CD4-positive, alpha-beta memory T cell (primary cell): ENCODE measurements at regions of chr17 and their contacts with region 1.

Region 1: DNA sequence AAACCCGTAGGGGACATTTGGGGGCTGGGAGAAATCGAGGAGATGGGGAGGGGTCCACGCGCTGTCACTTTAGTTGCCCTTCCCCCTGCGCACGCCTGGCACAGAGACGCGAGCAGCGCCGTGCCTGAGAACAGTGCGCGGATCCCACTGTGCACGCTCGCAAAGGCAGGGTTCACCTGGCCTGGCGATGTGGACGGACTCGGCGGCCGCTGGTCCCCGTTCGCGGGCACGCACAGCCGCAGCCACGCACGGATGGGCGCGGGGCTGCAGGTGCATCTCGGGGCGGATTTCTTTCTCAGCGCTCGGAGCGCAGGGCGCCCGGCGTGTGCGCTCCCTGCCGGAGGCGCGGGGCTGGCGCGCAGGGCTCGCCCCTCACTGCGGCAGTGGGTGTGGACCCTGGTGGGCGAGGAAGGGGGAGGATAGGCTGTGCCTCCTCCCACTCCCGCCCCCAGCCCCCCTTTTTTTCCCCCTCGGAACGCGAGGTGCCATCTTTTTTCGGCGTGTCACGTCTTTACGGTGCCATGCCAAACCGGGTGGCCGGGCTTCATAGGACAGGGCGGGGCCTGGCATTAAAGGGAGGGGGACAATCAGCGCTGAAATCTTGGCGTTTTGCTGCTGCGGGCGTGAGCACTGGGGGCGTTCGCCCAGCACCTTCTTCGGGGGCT is 1.1 kb downstream of the MAPT start:
- DNase-seq: peak; percentile 26 to 47 (median 32)
- H3K4me3 ChIP-seq: peak overlapping the region; percentile 47 to 76
- H3K4me3 Mint-ChIP-seq: peak overlapping the region; percentile 87 to 93 (median 88)
- H3K27ac ChIP-seq: no peak overlapping the region
- H3K27ac Mint-ChIP-seq: peak overlapping the region in 3 of 7 donors; percentile 65 to 79 (median 74)
- H3K4me1 ChIP-seq: peaks cover 25% of the 10 kb centered on the region
- H3K4me1 Mint-ChIP-seq: peaks cover 4 to 39% (median 23%) of the 10 kb centered on the region in 4 donors
- H3K27me3 ChIP-seq: peaks cover 34% of the 10 kb centered on the region
- H3K27me3 Mint-ChIP-seq: peaks cover 17 to 30% of the 10 kb centered on the region in 2 donors

Region 2: GRCh38 chr17:45828628-45829027 is 66.8 kb before region 1 on chr17:
- CTCF ChIA-PET with region 1: no interaction called
- POLR2A ChIA-PET with region 1: no interaction called
- intact Hi-C with region 1: no loop called
- DNase-seq: no peak
- H3K4me3 ChIP-seq: no peak overlapping the region
- H3K4me3 Mint-ChIP-seq: peak overlapping the region in 1 of 8 donors; percentile 33
- H3K27ac ChIP-seq: no peak overlapping the region
- H3K27ac Mint-ChIP-seq: no peak overlapping the region
- H3K4me1 ChIP-seq: peaks cover 4% of the 10 kb centered on the region
- H3K4me1 Mint-ChIP-seq: peaks cover 0 to 15% (median under 1%) of the 10 kb centered on the region in 4 donors
- H3K27me3 ChIP-seq: no peaks in the 10 kb centered on the region
- H3K27me3 Mint-ChIP-seq: peaks cover 1 to 4% of the 10 kb centered on the region in 2 donors

Region 3: DNA sequence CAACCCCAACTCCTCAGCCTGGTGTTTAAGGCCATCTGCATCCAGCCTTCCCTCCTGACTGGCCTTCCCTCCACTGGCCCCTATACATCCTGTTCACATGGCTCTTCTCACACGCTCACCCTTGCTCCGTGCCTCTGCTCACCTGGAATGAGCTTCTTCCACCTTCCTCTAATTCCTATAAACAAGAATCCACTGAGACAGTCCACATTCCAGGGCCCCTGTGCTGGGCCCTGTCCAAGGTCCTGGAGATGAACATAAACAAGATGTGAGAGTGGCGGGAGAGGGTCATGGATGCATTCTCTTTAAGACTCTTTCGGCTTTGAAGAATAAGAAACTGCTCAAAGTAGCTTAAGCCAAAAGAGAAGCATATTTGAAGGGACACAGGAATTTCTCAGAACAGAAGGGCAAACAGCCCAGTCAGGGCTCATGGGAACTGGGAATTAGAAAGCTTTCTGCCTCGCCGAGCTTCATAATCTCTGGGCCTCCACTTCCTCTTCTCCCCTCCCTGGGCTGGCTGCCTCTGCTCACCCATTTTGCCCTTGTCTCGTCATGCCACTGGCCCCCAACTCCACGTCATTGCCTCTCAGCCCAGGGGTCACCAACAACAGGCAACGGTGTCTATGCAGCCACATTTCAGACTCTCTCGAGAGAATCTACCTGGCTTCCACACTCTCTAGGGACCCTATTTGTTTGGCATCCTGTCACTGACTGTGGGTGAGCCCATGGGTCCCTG is 37.3 kb before region 1 on chr17:
- CTCF ChIA-PET with region 1: no interaction called
- POLR2A ChIA-PET with region 1: no interaction called
- intact Hi-C with region 1: no loop called
- DNase-seq: no peak
- H3K4me3 ChIP-seq: no peak overlapping the region
- H3K4me3 Mint-ChIP-seq: no peak overlapping the region
- H3K27ac ChIP-seq: no peak overlapping the region
- H3K27ac Mint-ChIP-seq: no peak overlapping the region
- H3K4me1 ChIP-seq: no peaks in the 10 kb centered on the region
- H3K4me1 Mint-ChIP-seq: peaks cover 0 to 3% (median 0%) of the 10 kb centered on the region in 4 donors
- H3K27me3 ChIP-seq: no peaks in the 10 kb centered on the region
- H3K27me3 Mint-ChIP-seq: peaks cover 20 to 34% of the 10 kb centered on the region in 2 donors

Region 4: DNA sequence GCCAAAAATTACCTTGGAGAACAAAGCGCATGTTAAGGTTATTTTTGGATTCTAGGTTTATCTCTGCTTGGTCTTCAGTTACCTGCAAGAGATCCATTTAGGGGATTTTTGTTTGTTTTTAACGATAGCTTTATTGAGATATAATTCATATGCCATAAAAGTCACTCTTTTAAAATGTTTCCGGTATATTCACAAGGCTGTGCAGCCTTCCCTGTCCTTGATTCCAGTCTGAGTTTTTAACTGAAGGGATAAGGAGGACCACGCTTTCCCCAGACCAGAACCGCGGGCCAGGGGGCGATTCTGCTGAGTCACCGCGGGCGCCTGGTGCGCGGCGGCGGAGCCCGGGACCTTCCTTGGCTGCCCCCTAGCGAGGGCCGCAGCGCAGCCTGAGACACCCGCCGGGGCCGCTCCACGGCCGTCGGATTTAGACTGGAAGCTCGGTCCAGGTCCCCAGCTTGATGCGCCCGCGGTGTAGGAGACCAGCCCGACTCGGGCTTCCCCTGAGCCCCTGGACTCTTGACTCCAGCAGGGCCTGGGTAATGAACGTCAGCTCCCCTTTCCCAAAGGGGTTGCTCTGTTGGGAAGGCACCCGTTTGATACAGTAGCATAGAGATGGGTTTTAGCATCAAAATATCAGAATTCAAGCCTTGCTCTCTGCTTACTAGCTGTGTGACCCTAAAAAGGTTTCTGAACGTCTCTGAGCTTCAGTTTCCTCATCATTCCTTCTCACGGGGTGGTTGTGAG is 53.6 kb after region 1 on chr17:
- CTCF ChIA-PET with region 1: interaction called, 7 read pairs
- POLR2A ChIA-PET with region 1: no interaction called
- intact Hi-C with region 1: loop called (anchors 1 kb)
- DNase-seq: peak in 4 of 5 donors; percentile 22 to 32 (median 26)
- H3K4me3 ChIP-seq: no peak overlapping the region
- H3K4me3 Mint-ChIP-seq: peak overlapping the region; percentile 39 to 79 (median 64)
- H3K27ac ChIP-seq: no peak overlapping the region
- H3K27ac Mint-ChIP-seq: no peak overlapping the region
- H3K4me1 ChIP-seq: peaks cover 11% of the 10 kb centered on the region
- H3K4me1 Mint-ChIP-seq: peaks cover 0 to 3% (median under 1%) of the 10 kb centered on the region in 4 donors
- H3K27me3 ChIP-seq: peaks cover 3% of the 10 kb centered on the region
- H3K27me3 Mint-ChIP-seq: peaks cover 13 to 15% of the 10 kb centered on the region in 2 donors